Naive thymus-derived CD4-positive, alpha-beta T cell (primary cell): ENCODE measurements at regions of chr1 and their contacts with region 1.

Region 1: DNA sequence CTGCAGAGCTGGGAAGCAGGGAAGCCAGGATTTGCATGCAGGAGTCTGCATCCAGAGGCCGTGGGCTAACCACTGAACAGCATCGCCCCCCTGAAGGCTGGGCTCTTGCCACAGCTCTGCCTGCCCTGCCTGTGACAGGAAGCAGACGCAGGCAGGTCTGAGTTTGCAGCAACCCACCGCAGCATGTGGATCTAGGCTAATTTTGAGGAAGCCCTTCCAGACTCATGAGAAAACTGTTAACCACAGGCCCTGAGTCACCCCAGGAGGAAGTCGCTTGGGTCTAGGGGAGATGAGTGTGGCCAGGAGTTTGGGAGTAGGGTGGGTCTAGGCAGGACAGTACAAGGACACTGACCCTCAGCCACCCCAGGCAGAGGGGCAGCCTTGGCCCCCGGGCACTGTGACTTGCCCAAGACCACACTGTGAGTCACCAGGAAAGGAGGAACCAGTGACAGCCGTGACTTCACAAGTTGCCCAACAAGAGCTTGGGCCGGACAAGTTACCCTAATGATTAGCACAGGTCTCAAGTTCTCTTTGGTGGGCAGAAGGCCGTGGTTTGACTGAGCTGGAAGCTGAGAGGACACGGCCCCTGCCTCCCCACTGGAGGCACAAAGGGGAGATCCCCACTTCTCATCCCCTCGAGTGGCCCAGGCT is 904 bp downstream of the LAPTM5 start:
- DNase-seq: peak; percentile 45 to 77 (median 65)
- ATAC-seq: peak; percentile 77
- H3K4me3 ChIP-seq: peak overlapping the region; percentile 80
- H3K4me3 Mint-ChIP-seq: peak overlapping the region; percentile 95 to 100 (median 98)
- H3K27ac ChIP-seq: peak overlapping the region; percentile 98
- H3K27ac Mint-ChIP-seq: peak overlapping the region; percentile 90 to 100 (median 97)
- H3K4me1 ChIP-seq: peaks cover 58 to 67% of the 10 kb centered on the region in 2 donors
- H3K4me1 Mint-ChIP-seq: peaks cover 68 to 90% (median 82%) of the 10 kb centered on the region in 7 donors
- H3K27me3 ChIP-seq: no peaks in the 10 kb centered on the region
- H3K27me3 Mint-ChIP-seq: no peaks in the 10 kb centered on the region

Region 2: DNA sequence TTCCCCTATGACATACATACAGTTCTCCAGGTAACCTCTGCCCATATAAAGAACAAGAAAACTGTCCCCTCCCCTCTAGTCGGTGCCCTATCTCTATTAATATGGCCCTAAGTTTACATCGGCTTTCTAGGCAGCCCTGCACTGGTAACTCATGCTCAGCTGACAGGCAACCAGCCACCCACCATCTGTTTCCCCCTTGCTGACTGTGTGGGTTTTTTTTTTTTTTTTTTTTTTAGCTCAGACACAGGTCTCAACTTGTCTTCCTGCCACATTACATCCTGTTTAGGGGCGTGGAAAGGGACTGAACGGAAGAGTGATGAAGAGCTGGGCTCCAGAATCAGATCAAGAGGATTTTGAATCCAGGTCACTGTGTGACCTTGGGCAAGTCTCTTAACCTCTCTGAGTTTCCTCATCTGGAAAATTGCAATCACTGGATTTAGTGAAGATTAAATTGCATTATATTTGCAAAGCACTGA is 13.0 kb before region 1 on chr1:
- CTCF ChIA-PET with region 1: interaction called, 133 read pairs
- POLR2A ChIA-PET with region 1: interaction called, 1,281 read pairs
- intact Hi-C with region 1: loop called (anchors 1 kb)
- DNase-seq: peak in 8 of 9 donors; percentile 58 to 90 (median 82)
- ATAC-seq: peak; percentile 83
- H3K4me3 ChIP-seq: peak overlapping the region; percentile 45
- H3K4me3 Mint-ChIP-seq: peak overlapping the region; percentile 82 to 98 (median 91)
- H3K27ac ChIP-seq: peak overlapping the region; percentile 98
- H3K27ac Mint-ChIP-seq: peak overlapping the region; percentile 90 to 100 (median 97)
- H3K4me1 ChIP-seq: peaks cover 84 to 86% of the 10 kb centered on the region in 2 donors
- H3K4me1 Mint-ChIP-seq: peaks cover 75 to 100% (median 97%) of the 10 kb centered on the region in 7 donors
- H3K27me3 ChIP-seq: no peaks in the 10 kb centered on the region
- H3K27me3 Mint-ChIP-seq: no peaks in the 10 kb centered on the region